Prostate gland (tissue), 2 donors: ENCODE measurements at regions of chr7 and their contacts with region 1.

Region 1: DNA sequence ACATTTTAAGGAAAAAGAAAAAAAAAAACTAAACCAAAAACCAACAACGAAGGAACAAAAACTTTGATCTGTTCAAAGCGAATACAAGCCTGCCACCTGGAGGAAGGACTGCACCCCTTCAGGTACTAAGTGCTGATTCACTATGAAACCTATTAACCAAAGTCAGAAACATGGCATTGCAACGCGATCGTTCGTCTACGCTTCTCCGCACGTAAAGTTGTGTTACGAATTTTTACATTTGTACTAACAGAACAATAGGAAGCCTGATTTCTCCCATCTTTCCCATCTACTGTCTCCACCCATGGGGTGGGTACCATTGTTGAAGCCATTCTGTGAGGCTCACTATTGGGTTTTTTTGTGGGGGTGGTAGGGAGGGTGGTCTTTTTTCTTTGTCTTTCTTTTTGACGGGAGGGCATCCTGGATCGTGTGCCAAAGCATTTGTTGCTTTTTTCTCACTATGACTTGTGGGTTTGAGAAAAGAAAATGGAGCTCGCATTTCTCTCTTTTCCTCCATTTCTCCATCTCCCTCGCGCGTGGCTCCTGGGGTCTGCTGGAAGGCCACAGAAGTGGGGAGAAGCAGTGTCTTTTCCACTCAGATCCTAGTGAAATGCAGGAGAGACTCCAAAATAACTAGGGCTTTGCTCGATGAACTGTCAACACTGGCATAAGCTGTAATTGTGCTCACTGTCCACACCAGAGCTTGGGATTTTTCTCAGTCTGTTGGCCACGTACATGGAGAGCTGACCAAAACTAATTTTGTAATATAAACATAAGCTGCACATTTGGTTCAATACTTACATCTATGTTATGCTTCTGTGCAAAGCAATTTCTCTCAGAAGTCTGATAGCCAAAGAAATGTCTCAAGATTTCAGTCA is 100.9 kb upstream of the YAE1 start:
- DNase-seq: peak; percentile 29
- H3K4me3 ChIP-seq: no peak overlapping the region
- H3K27ac ChIP-seq: no peak overlapping the region
- H3K4me1 ChIP-seq: no peaks in the 10 kb centered on the region
- H3K27me3 ChIP-seq: no peaks in the 10 kb centered on the region
- CTCF ChIP-seq: peak; percentile 12 to 79 (median 66)
- POLR2A ChIP-seq: no peak

Region 2: DNA sequence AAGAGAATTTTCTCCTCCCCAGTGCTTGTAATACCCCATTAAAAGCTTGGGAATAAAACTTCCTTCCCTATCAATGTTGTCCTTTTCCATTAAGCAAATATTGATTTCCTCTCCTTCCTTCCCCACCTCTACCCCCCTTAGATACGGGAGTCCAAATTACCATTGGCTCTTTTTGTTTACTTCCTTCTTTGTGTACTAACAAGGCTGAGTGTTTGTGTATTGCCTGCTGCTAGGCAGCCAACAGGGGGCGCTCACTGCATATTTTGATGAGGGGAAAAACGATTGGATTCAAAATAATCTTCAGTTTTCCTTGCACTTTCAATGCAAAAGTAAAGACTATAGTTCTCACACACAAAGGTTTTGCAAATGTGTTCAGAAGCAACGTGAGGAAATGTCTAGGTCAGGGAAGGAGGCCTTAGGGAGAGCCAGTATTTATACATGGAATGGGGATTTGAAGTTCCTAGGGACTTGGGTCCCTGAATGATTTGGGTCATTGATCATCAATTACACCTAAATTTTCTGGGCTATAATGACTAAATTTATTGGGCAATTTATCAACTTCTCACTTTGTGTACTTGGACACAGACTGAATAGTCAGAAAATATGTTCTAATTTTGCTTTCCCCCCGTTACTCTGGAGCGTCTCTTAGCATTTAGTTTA is 532.7 kb before region 1 on chr7:
- intact Hi-C with region 1: loop called (anchors 2 kb)
- DNase-seq: peak; percentile 40
- H3K4me3 ChIP-seq: no peak overlapping the region
- H3K27ac ChIP-seq: no peak overlapping the region
- H3K4me1 ChIP-seq: no peaks in the 10 kb centered on the region
- H3K27me3 ChIP-seq: no peaks in the 10 kb centered on the region
- CTCF ChIP-seq: peak; percentile 54 to 73 (median 62)
- POLR2A ChIP-seq: no peak

Region 3: DNA sequence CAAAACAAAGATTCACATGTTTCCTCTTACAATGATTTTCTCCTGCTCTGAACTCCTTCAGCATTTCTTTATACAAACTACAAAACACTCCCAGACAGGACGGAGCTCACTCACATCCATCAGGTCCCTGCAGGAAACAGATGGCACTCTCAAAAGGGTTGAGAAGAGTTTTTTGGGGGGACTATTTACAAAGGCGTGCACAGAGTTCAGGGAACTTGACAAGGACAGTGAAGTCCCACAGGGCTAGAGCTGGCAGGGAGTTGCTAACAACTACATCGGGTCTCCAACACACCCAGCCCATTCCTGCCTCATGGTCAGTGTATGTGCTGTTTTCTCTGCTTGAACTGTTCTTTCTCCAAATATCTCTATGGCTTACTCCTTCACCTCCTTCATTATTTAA is 76.2 kb after region 1 on chr7:
- intact Hi-C with region 1: no loop called
- DNase-seq: no peak
- H3K4me3 ChIP-seq: no peak overlapping the region
- H3K27ac ChIP-seq: no peak overlapping the region
- H3K4me1 ChIP-seq: no peaks in the 10 kb centered on the region
- H3K27me3 ChIP-seq: no peaks in the 10 kb centered on the region
- CTCF ChIP-seq: no peak
- POLR2A ChIP-seq: no peak